CD8-positive, alpha-beta memory T cell (primary cell): ENCODE measurements at regions of chr12 and their contacts with region 1.

Region 1: DNA sequence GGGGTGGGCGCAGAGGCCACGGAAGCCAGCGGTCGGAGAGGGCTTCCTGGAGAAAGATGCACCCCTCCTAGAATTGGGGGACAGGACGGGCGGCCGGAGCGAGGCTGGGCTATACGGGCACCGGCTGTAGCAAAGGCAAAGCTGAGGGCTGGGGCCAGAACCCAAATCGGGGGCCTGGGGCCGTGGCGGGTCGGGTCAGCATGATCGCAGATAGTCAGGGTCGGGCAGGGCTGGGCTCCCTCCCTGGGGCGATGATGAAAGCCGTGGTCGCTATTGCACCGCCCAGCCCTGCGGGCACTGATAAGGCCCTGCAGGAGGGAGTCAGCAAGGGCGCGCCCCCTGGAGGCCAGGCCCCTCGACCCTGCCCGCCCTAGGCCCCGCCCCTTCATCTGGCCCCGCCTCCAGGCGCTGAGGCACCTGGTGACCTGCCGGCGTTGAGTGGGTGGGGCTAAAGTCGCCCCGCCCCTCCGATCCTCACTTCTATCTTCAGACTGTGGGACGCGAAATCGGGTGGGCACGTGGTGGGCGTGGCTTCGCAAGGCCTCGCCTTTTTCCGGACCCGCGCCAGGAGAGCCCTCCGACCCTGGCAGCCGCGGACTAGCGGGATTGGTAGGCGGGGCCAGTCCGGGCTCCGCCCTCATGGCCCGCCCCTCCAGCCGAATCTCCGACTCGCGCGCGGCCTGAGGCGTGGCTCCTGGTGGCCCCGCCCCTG is 418 bp upstream of the SH2B3 start:
- DNase-seq: peak; percentile 98 to 99 (median 99)
- H3K4me3 ChIP-seq: peak overlapping the region; percentile 56
- H3K4me3 Mint-ChIP-seq: peak overlapping the region; percentile 78 to 96 (median 87)
- H3K27ac ChIP-seq: peak overlapping the region; percentile 92
- H3K27ac Mint-ChIP-seq: peak overlapping the region; percentile 85 to 97 (median 92)
- H3K4me1 ChIP-seq: peaks cover 62% of the 10 kb centered on the region
- H3K4me1 Mint-ChIP-seq: peaks cover 45 to 67% (median 52%) of the 10 kb centered on the region in 3 donors
- H3K27me3 ChIP-seq: no peaks in the 10 kb centered on the region
- H3K27me3 Mint-ChIP-seq: no peaks in the 10 kb centered on the region

Region 2: GRCh38 chr12:111428728-111429175 is 23.4 kb after region 1 on chr12:
- CTCF ChIA-PET with region 1: interaction called, 1,032 read pairs
- POLR2A ChIA-PET with region 1: interaction called, 24 read pairs
- DNase-seq: peak in 1 of 5 donors; percentile 46
- H3K4me3 ChIP-seq: no peak overlapping the region
- H3K4me3 Mint-ChIP-seq: peak overlapping the region; percentile 35 to 92 (median 74)
- H3K27ac ChIP-seq: peak overlapping the region; percentile 43
- H3K27ac Mint-ChIP-seq: peak overlapping the region; percentile 77 to 100 (median 94)
- H3K4me1 ChIP-seq: peaks cover 98% of the 10 kb centered on the region
- H3K4me1 Mint-ChIP-seq: peaks cover 83 to 95% (median 88%) of the 10 kb centered on the region in 3 donors
- H3K27me3 ChIP-seq: no peaks in the 10 kb centered on the region
- H3K27me3 Mint-ChIP-seq: no peaks in the 10 kb centered on the region

Region 3: GRCh38 chr12:111434680-111435338 is 29.5 kb after region 1 on chr12:
- CTCF ChIA-PET with region 1: interaction called, 1,032 read pairs
- POLR2A ChIA-PET with region 1: interaction called, 24 read pairs
- DNase-seq: peak; percentile 80 to 95 (median 89)
- H3K4me3 ChIP-seq: peak overlapping the region; percentile 49
- H3K4me3 Mint-ChIP-seq: peak overlapping the region; percentile 74 to 92 (median 87)
- H3K27ac ChIP-seq: peak overlapping the region; percentile 98
- H3K27ac Mint-ChIP-seq: peak overlapping the region; percentile 99 to 100 (median 100)
- H3K4me1 ChIP-seq: peaks cover 97% of the 10 kb centered on the region
- H3K4me1 Mint-ChIP-seq: peaks cover 85 to 98% (median 89%) of the 10 kb centered on the region in 3 donors
- H3K27me3 ChIP-seq: no peaks in the 10 kb centered on the region
- H3K27me3 Mint-ChIP-seq: peaks cover 0 to 3% of the 10 kb centered on the region in 2 donors

Region 4: GRCh38 chr12:111444925-111445725 is 39.8 kb after region 1 on chr12:
- CTCF ChIA-PET with region 1: interaction called, 1,032 read pairs
- POLR2A ChIA-PET with region 1: interaction called, 18 read pairs
- DNase-seq: peak; percentile 68 to 91 (median 73)
- H3K4me3 ChIP-seq: peak overlapping the region; percentile 26
- H3K4me3 Mint-ChIP-seq: peak overlapping the region; percentile 22 to 89 (median 75)
- H3K27ac ChIP-seq: peak overlapping the region; percentile 40
- H3K27ac Mint-ChIP-seq: peak overlapping the region; percentile 88 to 98 (median 94)
- H3K4me1 ChIP-seq: peaks cover 58% of the 10 kb centered on the region
- H3K4me1 Mint-ChIP-seq: peaks cover 69 to 83% (median 71%) of the 10 kb centered on the region in 3 donors
- H3K27me3 ChIP-seq: no peaks in the 10 kb centered on the region
- H3K27me3 Mint-ChIP-seq: peaks cover 0 to 3% of the 10 kb centered on the region in 2 donors